Prostate gland (tissue), 2 donors: ENCODE measurements at regions of chr1 and their contacts with region 1.

Region 1: GRCh38 chr1:239898062-239898730 is 193.5 kb upstream of the FMN2 start:
- DNase-seq: peak; percentile 81
- H3K4me3 ChIP-seq: no peak overlapping the region
- H3K27ac ChIP-seq: no peak overlapping the region
- H3K4me1 ChIP-seq: no peaks in the 10 kb centered on the region
- H3K27me3 ChIP-seq: no peaks in the 10 kb centered on the region
- CTCF ChIP-seq: peak; percentile 86 to 98 (median 94)
- POLR2A ChIP-seq: no peak

Region 2: GRCh38 chr1:238252033-238252802 is 1646.0 kb before region 1 on chr1:
- intact Hi-C with region 1: loop called (anchors 10 kb)
- DNase-seq: no peak
- H3K4me3 ChIP-seq: no peak overlapping the region
- H3K27ac ChIP-seq: no peak overlapping the region
- H3K4me1 ChIP-seq: no peaks in the 10 kb centered on the region
- H3K27me3 ChIP-seq: no peaks in the 10 kb centered on the region
- CTCF ChIP-seq: peak in 3 of 4 experiments; percentile 10 to 35 (median 24)
- POLR2A ChIP-seq: no peak

Region 3: DNA sequence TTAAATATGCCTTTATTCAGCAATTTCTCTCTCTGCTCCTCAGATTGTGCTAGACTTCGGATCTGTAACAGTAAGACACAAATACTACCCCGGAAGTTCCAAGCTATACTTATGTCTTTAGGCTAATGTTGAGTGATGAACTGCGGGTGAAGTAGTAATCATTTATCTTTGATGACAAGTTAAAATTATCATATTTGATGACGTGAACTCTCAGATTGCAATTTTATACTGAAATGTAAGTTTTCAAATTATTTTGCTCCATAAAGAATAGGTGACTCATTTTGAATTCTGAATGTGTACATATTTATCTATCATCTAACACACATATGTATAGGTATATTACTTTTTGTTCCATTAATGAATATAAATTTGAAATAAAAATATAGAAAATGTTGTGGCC is 501.2 kb before region 1 on chr1:
- intact Hi-C with region 1: loop called (anchors 5 kb)
- DNase-seq: no peak
- H3K4me3 ChIP-seq: no peak overlapping the region
- H3K27ac ChIP-seq: no peak overlapping the region
- H3K4me1 ChIP-seq: no peaks in the 10 kb centered on the region
- H3K27me3 ChIP-seq: no peaks in the 10 kb centered on the region
- CTCF ChIP-seq: no peak
- POLR2A ChIP-seq: no peak

Region 4: GRCh38 chr1:239700667-239701066 is 197.5 kb before region 1 on chr1:
- intact Hi-C with region 1: no loop called
- DNase-seq: no peak
- H3K4me3 ChIP-seq: no peak overlapping the region
- H3K27ac ChIP-seq: no peak overlapping the region
- H3K4me1 ChIP-seq: no peaks in the 10 kb centered on the region
- H3K27me3 ChIP-seq: no peaks in the 10 kb centered on the region
- CTCF ChIP-seq: no peak
- POLR2A ChIP-seq: no peak

Region 5: GRCh38 chr1:239778221-239778813 is 119.9 kb before region 1 on chr1:
- intact Hi-C with region 1: no loop called
- DNase-seq: peak; percentile 14
- H3K4me3 ChIP-seq: no peak overlapping the region
- H3K27ac ChIP-seq: no peak overlapping the region
- H3K4me1 ChIP-seq: no peaks in the 10 kb centered on the region
- H3K27me3 ChIP-seq: no peaks in the 10 kb centered on the region
- CTCF ChIP-seq: no peak
- POLR2A ChIP-seq: no peak